ENCODE measurements at regions of chr17 and their contacts with region 1.

Region 1: GRCh38 chr17:43846221-43846712 is 709 bp upstream of the CD300LG start:
- DNase-seq: peak; percentile 54 to 97 (median 86)

Region 2: DNA sequence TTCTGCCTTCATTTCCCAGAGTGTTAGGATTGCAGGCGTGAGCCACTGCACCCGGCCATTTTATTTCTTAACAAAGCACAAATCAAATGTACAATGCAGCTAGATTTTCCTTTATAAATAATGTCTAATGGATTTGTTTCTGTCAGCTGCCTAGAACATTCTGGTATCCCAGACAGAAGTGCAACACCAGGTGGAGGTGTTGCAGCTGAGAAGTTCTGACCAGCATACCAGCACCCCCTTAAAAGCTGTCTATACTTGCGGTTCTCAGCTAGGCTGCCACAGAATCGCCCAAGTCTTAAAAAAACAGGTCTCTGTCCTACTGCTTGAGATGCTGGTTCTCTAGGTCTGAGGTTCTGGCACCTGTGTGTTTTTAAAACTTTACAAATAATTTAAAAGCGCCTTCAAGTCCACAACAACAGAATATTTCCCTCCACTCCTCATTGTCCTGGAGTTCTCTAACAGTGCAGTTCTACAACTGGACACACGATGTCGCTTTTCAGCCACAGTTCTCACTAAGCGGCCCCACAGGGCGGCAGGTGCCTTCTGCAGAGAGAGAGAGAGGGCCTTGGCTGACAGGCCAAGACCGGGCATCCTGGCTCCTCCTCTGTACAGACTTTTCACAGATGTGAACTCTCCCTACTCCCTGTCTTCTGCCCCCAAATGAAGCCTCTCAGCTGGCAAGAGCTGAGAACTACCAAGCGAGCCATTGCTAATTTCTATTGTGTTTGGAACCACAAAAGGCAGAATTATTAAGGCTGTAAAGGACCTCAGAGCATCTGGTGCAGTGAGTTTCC is 152.0 kb before region 1 on chr17:
- intact Hi-C with region 1: loop called (anchors 5 kb)
- DNase-seq: peak; percentile 35 to 96 (median 76)

Region 3: GRCh38 chr17:43778337-43779144 is 67.7 kb before region 1 on chr17 and contains the start of gene DUSP3:
- intact Hi-C with region 1: loop called (anchors 1 kb)
- DNase-seq: peak; percentile 86 to 99 (median 92)